ENCODE measurements at regions of chr15 and their contacts with region 1.

Region 1: GRCh38 chr15:92714477-92715401 is 59.2 kb upstream of the FAM174B start:
- DNase-seq: peak; percentile 49 to 80 (median 75)
- ATAC-seq: peak; percentile 95
- H3K4me3 ChIP-seq: peak overlapping the region; percentile 47
- H3K4me3 Mint-ChIP-seq: peak overlapping the region; percentile 69 to 87 (median 81)
- H3K27ac ChIP-seq: no peak overlapping the region
- H3K27ac Mint-ChIP-seq: peak overlapping the region in 1 of 9 donors; percentile 3
- H3K4me1 ChIP-seq: peaks cover 4 to 6% of the 10 kb centered on the region in 2 donors
- H3K4me1 Mint-ChIP-seq: peaks cover 5 to 11% (median 8%) of the 10 kb centered on the region in 7 donors
- H3K27me3 ChIP-seq: no peaks in the 10 kb centered on the region
- H3K27me3 Mint-ChIP-seq: peaks cover 4 to 37% (median 13%) of the 10 kb centered on the region in 5 donors

Region 2: GRCh38 chr15:92097474-92098178 is 617.1 kb before region 1 on chr15:
- CTCF ChIA-PET with region 1: interaction called, 3 read pairs
- POLR2A ChIA-PET with region 1: no interaction called
- intact Hi-C with region 1: loop called in 1 of 2 experiments (anchors 1 kb)
- DNase-seq: peak in 7 of 9 donors; percentile 7 to 40 (median 29)
- ATAC-seq: peak; percentile 69
- H3K4me3 ChIP-seq: no peak overlapping the region
- H3K4me3 Mint-ChIP-seq: peak overlapping the region in 6 of 10 donors; percentile 10 to 53 (median 28)
- H3K27ac ChIP-seq: no peak overlapping the region
- H3K27ac Mint-ChIP-seq: peak overlapping the region in 4 of 9 donors; percentile 6 to 79 (median 70)
- H3K4me1 ChIP-seq: peaks cover 8 to 39% of the 10 kb centered on the region in 2 donors
- H3K4me1 Mint-ChIP-seq: peaks cover 30 to 68% (median 42%) of the 10 kb centered on the region in 7 donors
- H3K27me3 ChIP-seq: no peaks in the 10 kb centered on the region
- H3K27me3 Mint-ChIP-seq: no peaks in the 10 kb centered on the region

Region 3: GRCh38 chr15:92277776-92278175 is 437.0 kb before region 1 on chr15:
- CTCF ChIA-PET with region 1: no interaction called
- POLR2A ChIA-PET with region 1: no interaction called
- intact Hi-C with region 1: loop called in 1 of 2 experiments (anchors 10 kb)
- DNase-seq: peak in 1 of 9 donors; percentile 2
- ATAC-seq: no peak
- H3K4me3 ChIP-seq: no peak overlapping the region
- H3K4me3 Mint-ChIP-seq: no peak overlapping the region
- H3K27ac ChIP-seq: no peak overlapping the region
- H3K27ac Mint-ChIP-seq: no peak overlapping the region
- H3K4me1 ChIP-seq: no peaks in the 10 kb centered on the region
- H3K4me1 Mint-ChIP-seq: no peaks in the 10 kb centered on the region
- H3K27me3 ChIP-seq: no peaks in the 10 kb centered on the region
- H3K27me3 Mint-ChIP-seq: peaks cover 5 to 31% (median 24%) of the 10 kb centered on the region in 5 donors

Region 4: GRCh38 chr15:92391640-92392039 is 323.1 kb before region 1 on chr15:
- CTCF ChIA-PET with region 1: no interaction called
- POLR2A ChIA-PET with region 1: no interaction called
- intact Hi-C with region 1: loop called (anchors 2 to 5 kb)
- DNase-seq: no peak
- ATAC-seq: no peak
- H3K4me3 ChIP-seq: no peak overlapping the region
- H3K4me3 Mint-ChIP-seq: peak overlapping the region in 1 of 10 donors; percentile 54
- H3K27ac ChIP-seq: no peak overlapping the region
- H3K27ac Mint-ChIP-seq: no peak overlapping the region
- H3K4me1 ChIP-seq: no peaks in the 10 kb centered on the region
- H3K4me1 Mint-ChIP-seq: peaks cover 2 to 15% (median 6%) of the 10 kb centered on the region in 7 donors
- H3K27me3 ChIP-seq: peaks cover 0 to 3% of the 10 kb centered on the region in 2 donors
- H3K27me3 Mint-ChIP-seq: peaks cover 64 to 88% (median 70%) of the 10 kb centered on the region in 5 donors

Region 5: DNA sequence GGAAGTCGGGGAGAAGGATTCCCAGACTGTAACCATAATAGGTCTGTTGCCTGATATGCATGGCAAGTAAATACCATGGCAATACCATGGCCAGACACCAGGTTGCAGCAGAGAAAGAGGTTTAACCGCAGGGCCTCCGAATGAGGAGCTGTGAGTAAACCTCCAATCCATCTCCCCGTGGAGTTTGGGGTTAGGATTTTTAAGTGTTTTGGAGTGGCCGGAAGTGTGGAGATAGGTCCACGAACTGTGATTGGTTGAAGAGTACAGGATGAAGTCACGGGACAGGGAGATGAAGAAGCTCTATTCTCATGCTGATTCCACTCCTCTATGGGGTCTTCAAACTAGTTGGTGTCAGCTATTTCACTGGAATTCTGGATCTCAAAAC is 193.1 kb before region 1 on chr15:
- CTCF ChIA-PET with region 1: interaction called, 19 read pairs
- POLR2A ChIA-PET with region 1: interaction called, 3 read pairs
- intact Hi-C with region 1: loop called in 1 of 2 experiments (anchors 1 kb)
- DNase-seq: peak in 7 of 9 donors; percentile 17 to 47 (median 29)
- ATAC-seq: peak; percentile 61
- H3K4me3 ChIP-seq: no peak overlapping the region
- H3K4me3 Mint-ChIP-seq: no peak overlapping the region
- H3K27ac ChIP-seq: no peak overlapping the region
- H3K27ac Mint-ChIP-seq: no peak overlapping the region
- H3K4me1 ChIP-seq: no peaks in the 10 kb centered on the region
- H3K4me1 Mint-ChIP-seq: peaks cover 0 to 6% (median 4%) of the 10 kb centered on the region in 7 donors
- H3K27me3 ChIP-seq: no peaks in the 10 kb centered on the region
- H3K27me3 Mint-ChIP-seq: peaks cover 0 to 4% (median 0%) of the 10 kb centered on the region in 5 donors

Region 6: GRCh38 chr15:92611993-92612745 is 102.6 kb before region 1 on chr15:
- CTCF ChIA-PET with region 1: no interaction called
- POLR2A ChIA-PET with region 1: no interaction called
- intact Hi-C with region 1: loop called in 1 of 2 experiments (anchors 1 kb)
- DNase-seq: no peak
- ATAC-seq: no peak
- H3K4me3 ChIP-seq: no peak overlapping the region
- H3K4me3 Mint-ChIP-seq: no peak overlapping the region
- H3K27ac ChIP-seq: no peak overlapping the region
- H3K27ac Mint-ChIP-seq: no peak overlapping the region
- H3K4me1 ChIP-seq: no peaks in the 10 kb centered on the region
- H3K4me1 Mint-ChIP-seq: no peaks in the 10 kb centered on the region
- H3K27me3 ChIP-seq: no peaks in the 10 kb centered on the region
- H3K27me3 Mint-ChIP-seq: peaks cover 0 to 5% (median 0%) of the 10 kb centered on the region in 5 donors

Region 7: DNA sequence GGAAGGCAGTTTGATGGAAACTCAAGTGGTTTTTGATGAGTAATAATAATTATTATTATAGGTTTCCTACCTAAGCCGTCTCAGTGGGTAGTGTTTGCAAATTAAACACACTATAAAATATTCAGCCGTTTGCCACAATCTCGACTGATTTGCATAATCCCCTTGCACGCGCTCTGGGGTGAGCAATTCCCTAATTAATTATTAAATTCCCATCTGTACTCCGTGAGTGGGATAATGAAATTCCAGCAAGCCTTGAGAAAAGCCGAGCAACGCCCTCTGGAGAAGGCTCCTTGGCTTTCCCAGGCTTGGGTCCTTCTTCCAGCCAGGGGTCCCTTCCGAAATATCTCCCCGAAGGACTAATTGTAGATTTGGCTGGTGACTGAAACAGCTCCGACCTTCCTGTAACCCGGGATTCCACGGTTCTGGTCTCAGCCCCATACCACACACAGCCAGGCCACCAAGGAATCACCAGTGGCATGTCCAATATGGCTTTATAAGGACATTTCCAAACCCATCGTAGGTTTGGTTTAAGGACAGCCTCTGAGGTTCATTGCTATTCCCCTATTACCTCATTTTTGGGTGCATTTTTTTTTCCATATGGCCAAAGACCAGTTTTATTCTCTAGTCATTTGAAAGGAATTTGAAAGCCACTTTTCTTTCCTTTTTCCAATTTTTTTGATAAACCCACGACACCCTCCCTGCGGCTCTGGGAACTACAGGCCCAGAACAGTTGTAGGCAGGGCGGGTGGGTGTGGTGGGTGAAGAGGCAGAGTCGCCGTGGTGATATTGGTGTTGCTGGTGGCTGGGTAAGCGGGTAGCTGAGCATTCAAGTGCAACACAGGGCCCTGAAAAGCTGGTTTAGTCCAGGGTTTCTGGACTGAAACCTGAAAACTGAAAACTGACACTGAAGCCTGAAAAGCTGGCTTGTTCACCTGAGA is 407.5 kb after region 1 on chr15:
- CTCF ChIA-PET with region 1: no interaction called
- POLR2A ChIA-PET with region 1: no interaction called
- intact Hi-C with region 1: no loop called
- DNase-seq: no peak
- ATAC-seq: no peak
- H3K4me3 ChIP-seq: no peak overlapping the region
- H3K4me3 Mint-ChIP-seq: no peak overlapping the region
- H3K27ac ChIP-seq: no peak overlapping the region
- H3K27ac Mint-ChIP-seq: no peak overlapping the region
- H3K4me1 ChIP-seq: no peaks in the 10 kb centered on the region
- H3K4me1 Mint-ChIP-seq: peaks cover 0 to 8% (median 0%) of the 10 kb centered on the region in 7 donors
- H3K27me3 ChIP-seq: no peaks in the 10 kb centered on the region
- H3K27me3 Mint-ChIP-seq: peaks cover 9 to 21% (median 12%) of the 10 kb centered on the region in 5 donors

Measured in naive thymus-derived CD4-positive, alpha-beta T cell (primary cell).